ENCODE measurements at regions of chr19 and their contacts with region 1.

Region 1: DNA sequence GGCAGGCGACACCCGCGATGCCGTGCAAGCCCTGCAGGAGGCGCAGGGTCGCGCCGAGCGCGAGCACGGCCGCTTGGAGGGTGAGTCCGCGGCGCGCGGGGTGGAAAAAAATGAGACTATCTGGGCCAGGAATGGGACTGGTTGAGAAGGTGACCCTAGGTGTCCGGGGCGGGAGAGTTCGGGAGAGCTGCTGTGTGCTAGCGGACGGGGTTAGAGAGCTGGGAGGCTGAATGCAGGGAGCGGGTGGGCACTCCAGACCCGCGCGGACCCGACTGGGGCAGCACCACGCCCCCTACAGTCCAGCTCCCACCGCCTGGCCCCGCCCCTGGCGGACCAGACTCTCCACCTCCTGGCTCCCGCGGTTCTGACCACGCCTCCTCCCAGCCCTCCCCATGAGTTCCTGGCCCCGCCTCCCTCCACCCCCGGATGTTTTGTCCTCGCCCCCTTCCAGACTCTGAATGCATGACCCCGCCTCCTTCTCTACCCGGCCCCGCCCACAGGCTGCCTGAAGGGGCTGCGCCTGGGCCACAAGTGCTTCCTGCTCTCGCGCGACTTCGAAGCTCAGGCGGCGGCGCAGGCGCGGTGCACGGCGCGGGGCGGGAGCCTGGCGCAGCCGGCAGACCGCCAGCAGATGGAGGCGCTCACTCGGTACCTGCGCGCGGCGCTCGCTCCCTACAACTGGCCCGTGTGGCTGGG is 1.5 kb downstream of the CLEC11A start:
- DNase-seq: peak; percentile 99
- H3K4me3 ChIP-seq: peak overlapping the region; percentile 83
- H3K27ac ChIP-seq: peak overlapping the region; percentile 52
- H3K27me3 ChIP-seq: no peaks in the 10 kb centered on the region
- CTCF ChIP-seq: peak; percentile 78

Region 2: GRCh38 chr19:49837009-49837310 is 887.7 kb before region 1 on chr19:
- CTCF ChIA-PET with region 1: interaction called, 12 read pairs
- POLR2A ChIA-PET with region 1: no interaction called
- DNase-seq: no peak
- H3K4me3 ChIP-seq: no peak overlapping the region
- H3K27ac ChIP-seq: no peak overlapping the region
- H3K27me3 ChIP-seq: no peaks in the 10 kb centered on the region
- CTCF ChIP-seq: no peak

Region 3: GRCh38 chr19:50401605-50402450 is 322.8 kb before region 1 on chr19:
- CTCF ChIA-PET with region 1: no interaction called
- POLR2A ChIA-PET with region 1: no interaction called
- DNase-seq: no peak
- H3K4me3 ChIP-seq: no peak overlapping the region
- H3K27ac ChIP-seq: no peak overlapping the region
- H3K27me3 ChIP-seq: no peaks in the 10 kb centered on the region
- CTCF ChIP-seq: no peak

Region 4: GRCh38 chr19:50669302-50670101 is 55.2 kb before region 1 on chr19:
- CTCF ChIA-PET with region 1: interaction called, 15 read pairs
- POLR2A ChIA-PET with region 1: no interaction called
- DNase-seq: no peak
- H3K4me3 ChIP-seq: no peak overlapping the region
- H3K27ac ChIP-seq: no peak overlapping the region
- H3K27me3 ChIP-seq: peaks cover 36% of the 10 kb centered on the region
- CTCF ChIP-seq: peak; percentile 84

Region 5: GRCh38 chr19:50735869-50736268 is 11.2 kb after region 1 on chr19:
- CTCF ChIA-PET with region 1: interaction called, 11 read pairs
- POLR2A ChIA-PET with region 1: interaction called, 7 read pairs
- DNase-seq: no peak
- H3K4me3 ChIP-seq: no peak overlapping the region
- H3K27ac ChIP-seq: no peak overlapping the region
- H3K27me3 ChIP-seq: peaks cover 22% of the 10 kb centered on the region
- CTCF ChIP-seq: no peak

Region 6: GRCh38 chr19:50804420-50805272 is 80.0 kb after region 1 on chr19:
- CTCF ChIA-PET with region 1: interaction called, 8 read pairs
- POLR2A ChIA-PET with region 1: interaction called, 15 read pairs
- DNase-seq: peak; percentile 98
- H3K4me3 ChIP-seq: peak overlapping the region; percentile 99
- H3K27ac ChIP-seq: peak overlapping the region; percentile 100
- H3K27me3 ChIP-seq: no peaks in the 10 kb centered on the region
- CTCF ChIP-seq: no peak

Region 7: DNA sequence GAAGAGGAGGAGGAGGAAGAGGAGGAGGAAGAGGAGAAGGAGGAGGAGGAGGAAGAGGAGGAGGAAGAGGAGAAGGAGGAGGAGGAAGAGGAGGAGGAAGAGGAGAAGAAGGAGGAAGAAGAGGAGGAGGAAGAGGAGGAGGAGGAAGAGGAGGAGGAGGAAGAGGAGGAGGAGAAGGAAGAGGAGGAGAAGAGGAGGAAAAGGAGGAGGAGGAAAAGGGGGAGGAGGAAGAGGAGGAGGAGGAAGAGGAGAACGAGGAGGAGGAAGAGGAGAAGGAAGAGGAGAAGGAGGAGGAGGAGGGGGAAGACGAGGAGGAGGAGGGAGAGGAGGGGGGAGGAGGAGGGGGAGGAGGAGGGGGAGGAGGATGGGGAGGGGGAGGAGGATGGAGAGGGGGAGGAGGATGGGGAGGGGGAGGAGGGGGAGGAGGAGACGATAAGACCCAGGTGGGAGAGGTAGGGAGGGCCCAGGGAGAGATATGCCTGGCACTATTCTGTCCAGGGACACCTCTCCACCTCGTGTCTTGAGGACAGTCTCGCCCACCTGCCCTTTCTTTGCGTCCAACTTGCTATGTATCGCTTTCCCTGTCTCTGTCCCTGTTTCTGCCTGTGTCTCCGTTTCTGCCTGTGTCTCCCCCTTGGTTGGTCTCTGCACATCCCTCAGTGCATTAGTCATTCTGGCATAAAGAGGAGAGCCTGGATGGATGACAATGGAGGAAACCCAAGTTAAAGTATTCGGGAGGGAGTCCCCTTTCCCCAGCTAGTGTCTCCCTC is 235.2 kb after region 1 on chr19:
- CTCF ChIA-PET with region 1: no interaction called
- POLR2A ChIA-PET with region 1: no interaction called
- DNase-seq: no peak
- H3K4me3 ChIP-seq: no peak overlapping the region
- H3K27ac ChIP-seq: no peak overlapping the region
- H3K27me3 ChIP-seq: no peaks in the 10 kb centered on the region
- CTCF ChIP-seq: no peak